ENCODE measurements at regions of chr13 and their contacts with region 1.

Region 1: DNA sequence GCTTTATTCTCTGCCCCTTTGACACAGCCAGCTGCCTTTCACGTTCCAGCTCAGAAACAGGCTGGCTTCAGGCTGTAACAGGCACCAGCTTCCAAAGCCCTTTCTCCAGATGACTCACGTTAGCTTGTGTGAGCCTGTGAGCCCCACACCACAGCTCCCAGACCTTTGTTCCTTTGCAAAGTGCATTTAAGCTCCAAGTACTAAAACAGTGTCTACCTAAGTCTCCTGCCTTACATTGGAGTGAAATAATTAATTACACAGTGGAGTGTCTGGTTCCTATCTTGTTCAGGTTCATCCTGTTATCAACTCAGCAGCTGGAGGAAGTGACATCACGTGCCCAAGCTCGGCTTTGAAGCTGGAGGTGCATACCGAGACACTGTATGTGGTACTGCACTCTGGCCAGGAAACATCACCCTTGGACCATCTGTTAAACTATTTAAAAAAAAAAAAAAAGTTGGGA is 475.8 kb downstream of the FOXO1 start:
- DNase-seq: peak in 8 of 9 donors; percentile 36 to 87 (median 80)
- ATAC-seq: peak; percentile 49
- H3K4me3 ChIP-seq: peak overlapping the region; percentile 24
- H3K4me3 Mint-ChIP-seq: peak overlapping the region; percentile 74 to 89 (median 81)
- H3K27ac ChIP-seq: peak overlapping the region; percentile 63
- H3K27ac Mint-ChIP-seq: peak overlapping the region; percentile 96 to 100 (median 97)
- H3K4me1 ChIP-seq: peaks cover 55 to 69% of the 10 kb centered on the region in 2 donors
- H3K4me1 Mint-ChIP-seq: peaks cover 47 to 97% (median 87%) of the 10 kb centered on the region in 7 donors
- H3K27me3 ChIP-seq: no peaks in the 10 kb centered on the region
- H3K27me3 Mint-ChIP-seq: no peaks in the 10 kb centered on the region

Region 2: DNA sequence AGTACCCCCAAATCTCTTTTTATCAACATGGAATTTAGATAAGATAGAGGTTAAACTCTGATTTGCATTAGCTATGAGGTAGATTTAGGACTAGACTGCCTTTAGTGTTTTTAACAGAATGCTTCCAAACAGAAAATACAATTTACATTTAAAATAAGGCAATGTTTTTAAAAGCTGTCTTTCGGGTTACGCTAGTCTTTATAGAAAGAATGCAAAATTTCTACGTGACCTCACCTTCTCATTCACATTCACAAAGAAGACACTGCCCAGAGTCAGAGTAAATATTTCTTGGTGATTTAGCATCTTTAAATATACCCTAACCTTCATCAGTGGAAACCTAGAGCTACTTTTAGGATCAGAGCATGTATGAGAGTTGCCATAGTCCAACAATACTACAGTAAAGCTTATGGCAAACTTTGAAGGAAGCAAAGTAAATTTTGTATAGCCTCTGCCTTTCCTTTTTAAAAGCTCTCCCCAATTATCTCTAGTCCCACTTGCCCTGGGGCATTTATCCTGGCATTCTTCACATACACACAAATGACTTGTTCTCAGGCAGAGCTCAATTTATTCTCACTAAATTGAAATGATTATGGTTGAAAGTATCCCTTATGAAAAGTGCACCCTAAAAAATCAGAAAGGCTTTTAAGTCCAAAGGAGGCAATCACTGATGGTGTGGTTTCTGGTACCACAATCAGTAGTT is 1935.2 kb before region 1 on chr13:
- CTCF ChIA-PET with region 1: no interaction called
- POLR2A ChIA-PET with region 1: no interaction called
- intact Hi-C with region 1: no loop called
- DNase-seq: no peak
- ATAC-seq: no peak
- H3K4me3 ChIP-seq: no peak overlapping the region
- H3K4me3 Mint-ChIP-seq: no peak overlapping the region
- H3K27ac ChIP-seq: no peak overlapping the region
- H3K27ac Mint-ChIP-seq: no peak overlapping the region
- H3K4me1 ChIP-seq: no peaks in the 10 kb centered on the region
- H3K4me1 Mint-ChIP-seq: no peaks in the 10 kb centered on the region
- H3K27me3 ChIP-seq: no peaks in the 10 kb centered on the region
- H3K27me3 Mint-ChIP-seq: no peaks in the 10 kb centered on the region

Region 3: DNA sequence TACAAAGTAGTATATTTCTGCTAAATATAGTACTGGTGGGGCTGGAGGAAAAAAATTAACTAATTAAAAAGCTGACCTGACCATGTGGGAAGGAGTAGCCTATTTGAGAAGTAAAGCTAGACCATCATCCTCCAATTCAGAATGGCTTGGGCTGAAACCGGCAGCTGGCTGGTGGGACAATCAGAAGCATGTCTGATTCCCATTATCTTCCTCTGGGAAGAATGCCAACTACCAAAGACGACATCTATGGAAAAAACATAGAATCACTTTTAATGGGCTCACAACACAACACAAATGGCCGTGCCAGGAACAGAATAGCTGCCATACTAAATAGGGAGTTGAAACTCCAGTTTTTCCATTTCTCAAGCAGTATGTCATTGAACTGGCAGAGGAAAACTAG is 1624.2 kb before region 1 on chr13:
- CTCF ChIA-PET with region 1: no interaction called
- POLR2A ChIA-PET with region 1: no interaction called
- intact Hi-C with region 1: no loop called
- DNase-seq: no peak
- ATAC-seq: no peak
- H3K4me3 ChIP-seq: no peak overlapping the region
- H3K4me3 Mint-ChIP-seq: no peak overlapping the region
- H3K27ac ChIP-seq: no peak overlapping the region
- H3K27ac Mint-ChIP-seq: no peak overlapping the region
- H3K4me1 ChIP-seq: no peaks in the 10 kb centered on the region
- H3K4me1 Mint-ChIP-seq: no peaks in the 10 kb centered on the region
- H3K27me3 ChIP-seq: no peaks in the 10 kb centered on the region
- H3K27me3 Mint-ChIP-seq: peaks cover 0 to 30% (median 0%) of the 10 kb centered on the region in 5 donors

Region 4: GRCh38 chr13:39777527-39778061 is 413.1 kb before region 1 on chr13:
- CTCF ChIA-PET with region 1: interaction called, 3 read pairs
- POLR2A ChIA-PET with region 1: no interaction called
- intact Hi-C with region 1: loop called in 1 of 2 experiments (anchors 1 kb)
- DNase-seq: peak in 7 of 9 donors; percentile 7 to 58 (median 48)
- ATAC-seq: peak; percentile 62
- H3K4me3 ChIP-seq: no peak overlapping the region
- H3K4me3 Mint-ChIP-seq: peak overlapping the region in 2 of 10 donors; percentile 6 to 18
- H3K27ac ChIP-seq: no peak overlapping the region
- H3K27ac Mint-ChIP-seq: peak overlapping the region in 8 of 9 donors; percentile 8 to 60 (median 18)
- H3K4me1 ChIP-seq: peaks cover 0 to 22% of the 10 kb centered on the region in 2 donors
- H3K4me1 Mint-ChIP-seq: peaks cover 12 to 40% (median 36%) of the 10 kb centered on the region in 7 donors
- H3K27me3 ChIP-seq: no peaks in the 10 kb centered on the region
- H3K27me3 Mint-ChIP-seq: no peaks in the 10 kb centered on the region

Region 5: DNA sequence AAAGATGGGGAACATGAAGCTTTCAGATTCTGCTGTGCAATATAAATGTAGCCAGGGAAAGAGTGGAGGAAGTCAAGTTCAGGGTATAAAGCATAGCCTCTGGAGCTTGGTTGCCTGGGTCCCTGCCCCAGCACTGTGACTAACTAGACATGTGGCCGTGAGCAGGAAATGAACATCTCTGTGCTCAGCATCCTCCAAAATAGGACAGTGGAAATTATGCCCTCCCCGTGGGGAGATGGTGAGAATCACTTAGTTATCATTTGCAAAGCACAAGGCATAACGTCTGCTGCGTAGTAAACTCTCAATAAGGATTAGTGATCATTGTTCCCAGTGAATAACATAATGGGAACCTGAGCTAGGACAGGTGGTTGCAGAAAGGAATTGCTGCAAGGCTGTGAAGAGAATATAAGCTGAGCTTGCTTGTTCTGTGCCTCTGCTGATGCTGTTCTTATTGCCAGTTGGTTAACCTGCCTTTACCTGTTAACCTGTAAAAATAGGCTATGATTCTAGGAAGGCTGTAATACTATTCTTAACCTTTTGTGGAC is 94.2 kb before region 1 on chr13:
- CTCF ChIA-PET with region 1: interaction called, 6 read pairs
- POLR2A ChIA-PET with region 1: no interaction called
- intact Hi-C with region 1: loop called in 1 of 2 experiments (anchors 1 kb)
- DNase-seq: peak in 7 of 9 donors; percentile 7 to 51 (median 36)
- ATAC-seq: peak; percentile 66
- H3K4me3 ChIP-seq: no peak overlapping the region
- H3K4me3 Mint-ChIP-seq: peak overlapping the region in 2 of 10 donors; percentile 1 to 8
- H3K27ac ChIP-seq: no peak overlapping the region
- H3K27ac Mint-ChIP-seq: peak overlapping the region in 8 of 9 donors; percentile 2 to 68 (median 32)
- H3K4me1 ChIP-seq: peaks cover 0 to 8% of the 10 kb centered on the region in 2 donors
- H3K4me1 Mint-ChIP-seq: peaks cover 10 to 27% (median 19%) of the 10 kb centered on the region in 7 donors
- H3K27me3 ChIP-seq: no peaks in the 10 kb centered on the region
- H3K27me3 Mint-ChIP-seq: no peaks in the 10 kb centered on the region

Region 6: GRCh38 chr13:40206241-40207000 is 15.8 kb after region 1 on chr13:
- CTCF ChIA-PET with region 1: interaction called, 33 read pairs
- POLR2A ChIA-PET with region 1: interaction called, 18 read pairs
- intact Hi-C with region 1: loop called (anchors 1 kb)
- DNase-seq: peak in 8 of 9 donors; percentile 14 to 82 (median 78)
- ATAC-seq: peak; percentile 92
- H3K4me3 ChIP-seq: peak overlapping the region; percentile 19
- H3K4me3 Mint-ChIP-seq: peak overlapping the region; percentile 60 to 86 (median 80)
- H3K27ac ChIP-seq: peak overlapping the region; percentile 73
- H3K27ac Mint-ChIP-seq: peak overlapping the region; percentile 97 to 100 (median 99)
- H3K4me1 ChIP-seq: peaks cover 44 to 70% of the 10 kb centered on the region in 2 donors
- H3K4me1 Mint-ChIP-seq: peaks cover 41 to 88% (median 84%) of the 10 kb centered on the region in 7 donors
- H3K27me3 ChIP-seq: no peaks in the 10 kb centered on the region
- H3K27me3 Mint-ChIP-seq: no peaks in the 10 kb centered on the region

Region 7: GRCh38 chr13:40388617-40389016 is 197.9 kb after region 1 on chr13:
- CTCF ChIA-PET with region 1: no interaction called
- POLR2A ChIA-PET with region 1: interaction called, 11 read pairs
- intact Hi-C with region 1: loop called (anchors 1 kb)
- DNase-seq: peak; percentile 36 to 88 (median 82)
- ATAC-seq: peak; percentile 96
- H3K4me3 ChIP-seq: peak overlapping the region; percentile 80
- H3K4me3 Mint-ChIP-seq: peak overlapping the region; percentile 80 to 95 (median 88)
- H3K27ac ChIP-seq: peak overlapping the region; percentile 78
- H3K27ac Mint-ChIP-seq: peak overlapping the region; percentile 95 to 100 (median 98)
- H3K4me1 ChIP-seq: peaks cover 16 to 23% of the 10 kb centered on the region in 2 donors
- H3K4me1 Mint-ChIP-seq: peaks cover 35 to 76% (median 60%) of the 10 kb centered on the region in 7 donors
- H3K27me3 ChIP-seq: no peaks in the 10 kb centered on the region
- H3K27me3 Mint-ChIP-seq: no peaks in the 10 kb centered on the region

Region 8: GRCh38 chr13:40597740-40598370 is 407.2 kb after region 1 on chr13:
- CTCF ChIA-PET with region 1: no interaction called
- POLR2A ChIA-PET with region 1: no interaction called
- intact Hi-C with region 1: loop called in 1 of 2 experiments (anchors 5 kb)
- DNase-seq: no peak
- ATAC-seq: no peak
- H3K4me3 ChIP-seq: no peak overlapping the region
- H3K4me3 Mint-ChIP-seq: peak overlapping the region; percentile 23 to 77 (median 64)
- H3K27ac ChIP-seq: no peak overlapping the region
- H3K27ac Mint-ChIP-seq: peak overlapping the region; percentile 54 to 90 (median 83)
- H3K4me1 ChIP-seq: peaks cover 43 to 92% of the 10 kb centered on the region in 2 donors
- H3K4me1 Mint-ChIP-seq: peaks cover 66 to 100% (median 93%) of the 10 kb centered on the region in 7 donors
- H3K27me3 ChIP-seq: no peaks in the 10 kb centered on the region
- H3K27me3 Mint-ChIP-seq: no peaks in the 10 kb centered on the region

Region 9: GRCh38 chr13:40922437-40923040 is 731.9 kb after region 1 on chr13:
- CTCF ChIA-PET with region 1: no interaction called
- POLR2A ChIA-PET with region 1: no interaction called
- intact Hi-C with region 1: loop called in 1 of 2 experiments (anchors 1 kb)
- DNase-seq: no peak
- ATAC-seq: no peak
- H3K4me3 ChIP-seq: no peak overlapping the region
- H3K4me3 Mint-ChIP-seq: peak overlapping the region in 9 of 10 donors; percentile 53 to 100 (median 72)
- H3K27ac ChIP-seq: no peak overlapping the region
- H3K27ac Mint-ChIP-seq: peak overlapping the region; percentile 54 to 96 (median 91)
- H3K4me1 ChIP-seq: peaks cover 0 to 8% of the 10 kb centered on the region in 2 donors
- H3K4me1 Mint-ChIP-seq: peaks cover 11 to 33% (median 23%) of the 10 kb centered on the region in 7 donors
- H3K27me3 ChIP-seq: no peaks in the 10 kb centered on the region
- H3K27me3 Mint-ChIP-seq: no peaks in the 10 kb centered on the region

Measured in naive thymus-derived CD4-positive, alpha-beta T cell (primary cell).